ENCODE measurements at regions of chr2 and their contacts with region 1.

Region 1: DNA sequence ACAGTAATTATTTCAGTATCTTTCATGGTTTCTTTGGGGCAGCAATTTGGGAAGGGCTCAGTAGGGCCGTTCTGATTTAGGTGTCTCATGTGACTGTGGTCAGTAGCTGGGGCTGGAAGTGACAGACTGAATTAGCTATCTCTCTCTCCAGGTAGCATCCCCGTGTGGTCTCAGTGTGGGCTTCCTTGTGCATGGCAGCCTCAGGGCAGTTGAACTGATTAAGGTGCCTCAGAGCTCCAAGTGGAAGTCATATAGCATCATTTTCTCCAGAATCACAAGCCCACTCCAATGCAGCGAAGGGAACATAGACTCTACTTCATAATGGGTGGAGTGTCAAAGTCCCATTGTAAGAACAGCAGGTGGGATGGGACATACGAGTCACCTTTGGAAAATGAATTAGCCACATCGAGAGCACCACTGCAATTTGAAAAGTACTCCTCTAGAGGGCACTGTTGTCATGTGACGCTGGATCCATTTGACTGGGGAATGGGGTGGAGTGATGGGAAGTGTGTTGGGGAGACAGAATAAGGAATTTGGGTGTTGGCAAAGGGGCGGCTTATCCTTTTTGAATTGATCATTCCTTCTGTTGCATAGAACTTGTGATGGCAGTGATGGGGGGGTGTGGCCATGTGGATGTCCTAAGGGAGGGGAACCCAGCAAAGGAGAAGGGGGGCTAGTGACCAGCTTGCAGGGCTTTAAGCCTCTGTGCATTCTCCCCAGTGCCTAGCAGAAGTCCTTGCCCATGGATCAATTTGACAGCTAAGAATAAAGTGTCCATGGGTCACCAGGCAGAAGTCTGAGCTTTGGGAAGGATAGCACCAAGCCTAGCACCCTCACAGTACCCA is 39.3 kb upstream of the FAM136A start:
- DNase-seq: no peak
- H3K4me3 ChIP-seq: no peak overlapping the region
- H3K27ac ChIP-seq: no peak overlapping the region
- H3K4me1 ChIP-seq: no peaks in the 10 kb centered on the region
- H3K27me3 ChIP-seq: peaks cover 0 to 18% (median 0%) of the 10 kb centered on the region in 4 donors
- CTCF ChIP-seq: peak; percentile 43 to 69 (median 44)
- EP300 ChIP-seq: no peak
- POLR2A ChIP-seq: no peak

Region 2: GRCh38 chr2:70616168-70616694 is 275.1 kb after region 1 on chr2:
- intact Hi-C with region 1: loop called (anchors 10 kb)
- DNase-seq: no peak
- H3K4me3 ChIP-seq: no peak overlapping the region
- H3K27ac ChIP-seq: no peak overlapping the region
- H3K4me1 ChIP-seq: peaks cover 0 to 7% (median 2%) of the 10 kb centered on the region in 4 donors
- H3K27me3 ChIP-seq: peaks cover 0 to 5% (median 0%) of the 10 kb centered on the region in 4 donors
- CTCF ChIP-seq: no peak
- EP300 ChIP-seq: no peak
- POLR2A ChIP-seq: no peak

Region 3: DNA sequence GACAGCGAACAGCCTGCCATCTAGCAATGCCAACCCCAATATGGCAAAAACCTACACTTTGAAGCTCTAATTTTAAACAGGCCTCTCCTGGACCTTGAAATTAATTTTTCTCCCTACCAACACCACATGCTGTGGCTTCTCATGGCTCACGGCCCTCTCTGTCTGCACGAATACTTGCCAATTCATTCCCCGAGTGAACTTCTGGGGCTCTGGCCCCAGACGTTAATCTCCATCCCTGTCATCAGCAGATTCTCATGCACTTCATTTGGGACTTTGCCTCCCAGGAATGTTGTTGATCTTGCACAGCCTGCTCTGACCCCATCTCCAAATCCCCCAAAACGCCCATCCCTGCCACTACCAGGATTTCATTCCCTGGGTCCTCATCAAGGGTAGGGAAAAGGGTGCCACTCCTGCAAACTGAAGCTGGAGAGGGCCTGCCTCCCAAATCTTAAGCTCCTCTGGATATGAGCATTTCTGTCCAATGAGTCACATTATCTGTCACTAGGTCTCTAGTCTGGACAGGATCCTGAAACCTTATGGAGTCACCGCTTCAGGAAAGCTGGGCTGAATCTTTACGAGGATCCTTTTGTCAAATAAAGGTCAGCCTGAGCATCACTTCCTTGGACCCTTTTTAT is 438.9 kb after region 1 on chr2:
- intact Hi-C with region 1: loop called (anchors 5 kb)
- DNase-seq: no peak
- H3K4me3 ChIP-seq: no peak overlapping the region
- H3K27ac ChIP-seq: no peak overlapping the region
- H3K4me1 ChIP-seq: no peaks in the 10 kb centered on the region
- H3K27me3 ChIP-seq: peaks cover 0 to 38% (median 0%) of the 10 kb centered on the region in 4 donors
- CTCF ChIP-seq: no peak
- EP300 ChIP-seq: no peak
- POLR2A ChIP-seq: no peak

Measured in esophagus muscularis mucosa (tissue), 4 donors.